Heart right ventricle (tissue), 16 donors: ENCODE measurements at regions of chr7 and their contacts with region 1.

Region 1: DNA sequence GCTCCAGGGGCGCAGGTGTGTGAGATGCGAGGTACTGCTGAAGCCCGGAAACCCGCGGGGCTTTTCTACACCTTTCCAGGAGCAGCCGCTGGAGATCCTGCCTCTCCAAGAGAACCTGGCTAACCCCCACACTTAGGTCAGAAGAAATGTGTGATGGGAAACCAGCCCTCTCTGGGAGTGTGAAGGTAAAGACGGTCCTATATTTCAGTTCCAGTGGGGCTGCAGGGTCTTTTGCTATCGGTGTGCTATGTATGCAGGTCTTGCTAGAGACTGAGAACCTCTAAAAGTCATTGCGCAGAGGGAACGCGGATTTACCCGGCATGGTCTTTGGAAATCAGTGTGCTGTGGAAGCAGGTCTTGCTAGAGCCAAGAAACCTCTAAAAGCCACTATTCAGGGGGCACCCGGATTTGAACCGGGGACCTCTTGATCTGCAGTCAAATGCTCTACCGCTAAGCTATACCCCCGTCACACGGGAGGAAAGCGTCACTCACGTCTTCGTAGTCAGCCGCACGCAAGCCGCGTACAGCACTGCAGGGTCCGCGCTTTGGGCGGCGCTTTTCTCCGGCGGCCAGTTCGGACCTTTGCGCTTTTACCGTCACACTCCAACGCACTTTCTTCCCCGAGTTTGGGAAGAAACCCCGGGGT is 46.0 kb downstream of the ZNF777 start:
- DNase-seq: peak; percentile 52 to 69
- ATAC-seq: peak; percentile 69 to 94 (median 84)
- H3K4me3 ChIP-seq: peak overlapping the region in 8 of 10 donors; percentile 23 to 46 (median 37)
- H3K27ac ChIP-seq: peak overlapping the region in 2 of 10 donors; percentile 29 to 40
- H3K4me1 ChIP-seq: peaks cover 0 to 12% (median 6%) of the 10 kb centered on the region in 9 donors
- H3K27me3 ChIP-seq: peaks cover 0 to 25% (median 0%) of the 10 kb centered on the region in 7 donors
- CTCF ChIP-seq: no peak

Region 2: DNA sequence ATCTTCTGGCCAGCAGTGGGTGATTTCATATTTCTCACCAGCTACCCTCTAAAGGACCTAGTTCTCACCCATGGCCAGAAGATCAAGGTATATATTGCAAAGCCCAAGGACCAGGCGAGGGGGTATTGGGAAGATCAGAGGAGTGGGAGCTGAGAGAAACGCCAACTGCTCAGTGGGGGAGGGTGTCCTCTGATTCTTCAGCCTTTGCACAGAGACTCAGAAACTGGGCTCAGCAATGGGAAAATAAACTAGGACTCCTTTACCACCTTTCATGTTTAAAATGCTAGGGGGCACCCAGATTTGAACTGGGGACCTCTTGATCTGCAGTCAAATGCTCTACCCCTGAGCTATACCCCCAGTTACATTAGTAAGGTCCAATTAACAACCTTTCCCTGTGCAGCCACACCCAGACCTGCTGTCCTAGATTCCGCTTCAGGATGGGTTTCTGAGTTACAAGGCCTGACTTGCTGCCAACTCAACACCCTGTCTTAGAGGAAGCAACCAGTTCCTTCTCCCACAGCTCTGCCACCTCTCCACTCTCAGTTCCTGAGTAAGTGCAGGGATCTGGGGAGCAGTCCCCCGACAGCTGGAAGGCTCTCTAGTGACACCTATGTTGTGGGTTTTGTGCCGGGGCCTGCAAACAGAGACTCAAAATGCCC is 59.3 kb before region 1 on chr7:
- intact Hi-C with region 1: loop called in 1 of 10 experiments (anchors 10 kb)
- DNase-seq: no peak
- ATAC-seq: no peak
- H3K4me3 ChIP-seq: no peak overlapping the region
- H3K27ac ChIP-seq: no peak overlapping the region
- H3K4me1 ChIP-seq: no peaks in the 10 kb centered on the region
- H3K27me3 ChIP-seq: no peaks in the 10 kb centered on the region
- CTCF ChIP-seq: no peak

Region 3: GRCh38 chr7:149369508-149369907 is 45.4 kb before region 1 on chr7:
- intact Hi-C with region 1: no loop called
- DNase-seq: no peak
- ATAC-seq: no peak
- H3K4me3 ChIP-seq: no peak overlapping the region
- H3K27ac ChIP-seq: no peak overlapping the region
- H3K4me1 ChIP-seq: no peaks in the 10 kb centered on the region
- H3K27me3 ChIP-seq: no peaks in the 10 kb centered on the region
- CTCF ChIP-seq: no peak